ENCODE measurements at regions of chr17 and their contacts with region 1.

Region 1: GRCh38 chr17:50151041-50151936 is 812 bp upstream of the PPP1R9B start:
- DNase-seq: peak; percentile 86 to 98 (median 90)

Region 2: GRCh38 chr17:49763735-49764558 is 387.3 kb before region 1 on chr17 and contains the start of gene FAM117A:
- intact Hi-C with region 1: no loop called
- DNase-seq: peak; percentile 87 to 99 (median 97)

Region 3: DNA sequence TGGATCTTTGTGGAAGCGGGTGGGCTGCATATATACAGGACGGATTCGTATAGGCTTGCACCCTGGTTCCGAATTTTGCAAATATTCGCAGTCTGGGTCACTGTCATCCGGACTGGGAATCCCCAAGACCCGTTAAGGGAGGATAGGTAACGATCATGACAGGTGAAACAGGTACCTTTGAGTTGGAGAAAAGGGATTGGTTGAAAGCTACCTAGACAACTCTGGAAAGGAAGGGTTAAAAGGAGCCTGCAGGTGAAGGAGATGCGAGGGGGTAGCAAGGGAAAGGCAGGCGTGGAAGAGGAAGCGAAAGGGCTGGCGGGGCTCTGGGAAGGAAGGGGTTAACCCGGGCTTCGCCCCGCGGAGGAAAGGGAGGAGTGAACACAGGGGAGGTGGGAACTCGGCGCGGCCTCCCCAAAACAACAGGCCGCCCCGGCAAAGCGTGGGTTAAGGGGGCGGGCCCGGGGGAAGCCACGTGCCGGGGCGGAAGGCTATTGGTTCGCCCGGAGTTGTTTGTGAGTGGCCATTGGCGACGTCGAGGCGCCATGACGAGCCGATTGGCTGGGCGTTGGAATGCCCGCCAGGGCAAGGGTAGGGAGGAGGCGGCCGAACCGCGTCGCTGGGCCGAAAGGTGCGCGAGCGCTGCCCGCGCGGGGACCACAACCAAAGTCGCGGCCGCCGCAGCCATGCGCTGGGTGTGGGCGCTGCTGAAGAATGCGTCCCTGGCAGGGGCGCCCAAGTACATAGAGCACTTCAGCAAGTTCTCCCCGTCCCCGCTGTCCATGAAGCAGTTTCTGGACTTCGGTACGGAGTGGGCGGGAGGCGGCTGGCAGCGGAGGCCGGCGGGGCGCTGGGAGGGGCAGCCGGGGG is 56.3 kb before region 1 on chr17 and contains the start of gene PDK2:
- intact Hi-C with region 1: loop called (anchors 2 kb)
- DNase-seq: peak; percentile 93 to 100 (median 96)

Region 4: DNA sequence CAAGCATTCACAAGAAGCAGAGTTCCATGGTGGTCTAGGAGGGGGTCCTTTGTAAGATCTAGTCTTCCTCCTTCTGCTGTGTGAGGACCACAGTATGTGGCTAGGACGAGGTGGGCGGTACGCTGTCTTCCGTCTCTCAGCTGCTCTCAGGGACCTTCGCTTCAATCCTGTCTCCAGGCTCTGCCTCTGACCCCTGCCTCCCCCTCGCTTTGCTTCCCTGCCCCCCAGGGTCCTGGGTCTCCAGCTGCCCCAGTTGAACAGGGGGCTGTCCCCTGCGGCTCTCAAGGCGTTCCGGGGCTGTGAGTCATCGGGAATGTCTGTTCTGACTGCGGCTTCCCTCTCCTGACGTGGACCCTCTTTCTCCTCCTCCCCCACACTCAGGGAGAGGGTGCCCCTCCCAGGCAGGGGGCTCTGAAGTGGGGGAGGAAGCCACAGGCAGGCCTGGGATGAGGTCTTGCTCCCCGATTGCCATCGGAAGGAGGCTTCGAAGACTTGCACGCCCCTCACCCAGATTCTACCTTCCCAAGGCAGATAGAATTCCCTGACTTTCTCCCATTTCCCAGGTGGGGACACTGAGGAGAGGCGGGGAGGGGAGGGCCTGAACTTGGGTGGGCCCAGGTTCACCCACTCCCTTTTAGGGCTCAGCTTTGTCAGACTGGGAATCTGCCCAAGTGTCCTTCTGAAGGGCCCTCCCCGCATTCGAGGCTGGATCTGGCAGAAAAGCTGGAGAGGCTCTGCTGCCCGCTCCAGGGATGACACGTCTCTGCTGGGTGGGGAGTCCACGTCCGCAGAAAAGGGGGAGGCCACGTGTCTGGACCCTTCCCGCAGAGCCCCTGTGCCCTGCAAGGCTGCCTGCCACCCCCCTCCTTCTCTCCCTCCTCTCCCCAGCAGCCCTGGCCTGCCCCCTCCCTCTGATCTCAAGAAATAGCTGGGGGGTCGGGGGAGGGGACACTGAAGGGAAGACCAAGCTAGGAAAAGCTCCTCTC is 59.2 kb after region 1 on chr17:
- intact Hi-C with region 1: no loop called
- DNase-seq: no peak

Region 5: GRCh38 chr17:50904521-50905459 is 753.5 kb after region 1 on chr17:
- intact Hi-C with region 1: no loop called
- DNase-seq: peak in 9 of 10 donors; percentile 25 to 90 (median 66)